ENCODE measurements at regions of chr14 and their contacts with region 1.

Region 1: DNA sequence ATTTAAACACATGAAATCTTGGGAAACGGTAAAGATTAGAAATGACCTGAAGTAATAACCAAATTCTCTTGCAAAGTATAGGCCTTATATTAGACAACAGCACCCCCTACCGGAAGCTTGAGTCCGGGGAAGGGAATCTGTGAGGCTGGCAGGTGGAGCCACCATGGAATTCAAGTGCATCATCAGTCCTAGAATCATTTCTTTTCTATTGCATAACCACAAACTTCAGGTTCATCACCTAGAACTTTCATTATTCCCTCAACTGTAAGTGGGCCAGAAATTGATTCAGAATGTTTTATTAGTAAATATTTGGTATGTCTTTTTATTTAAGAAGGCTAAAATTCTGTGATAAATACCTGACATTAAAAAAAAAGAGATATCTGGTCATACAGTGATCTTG is 48.5 kb downstream of the AP5M1 start:
- DNase-seq: peak; percentile 74 to 88
- H3K4me3 ChIP-seq: no peak overlapping the region
- H3K4me3 Mint-ChIP-seq: no peak overlapping the region
- H3K27ac Mint-ChIP-seq: no peak overlapping the region
- H3K4me1 ChIP-seq: no peaks in the 10 kb centered on the region
- H3K4me1 Mint-ChIP-seq: no peaks in the 10 kb centered on the region
- H3K27me3 ChIP-seq: no peaks in the 10 kb centered on the region
- H3K27me3 Mint-ChIP-seq: peaks cover 3% of the 10 kb centered on the region
- CTCF ChIP-seq: peak; percentile 69 to 86

Region 2: DNA sequence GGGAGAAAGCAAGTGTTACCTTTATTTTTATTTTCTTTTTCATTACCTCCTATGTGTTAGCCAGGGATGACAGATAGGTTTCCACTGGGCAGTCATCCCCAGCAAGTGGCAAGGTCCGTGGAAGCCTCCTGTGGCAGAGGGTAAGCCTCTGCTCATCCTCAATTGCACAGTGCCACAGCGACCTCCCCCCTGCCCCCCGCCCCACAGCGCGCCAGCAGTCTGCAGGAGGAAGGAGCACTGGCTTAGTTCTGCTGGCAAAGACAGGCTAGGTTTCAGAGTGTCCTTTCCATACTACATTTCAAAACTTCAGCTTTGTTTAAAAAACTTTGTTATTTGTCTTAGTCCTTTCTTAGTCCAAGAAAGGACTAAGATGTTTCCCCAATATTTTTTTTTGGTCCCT is 243.3 kb before region 1 on chr14:
- CTCF ChIA-PET with region 1: no interaction called
- POLR2A ChIA-PET with region 1: no interaction called
- intact Hi-C with region 1: loop called (anchors 2 kb)
- DNase-seq: no peak
- H3K4me3 ChIP-seq: no peak overlapping the region
- H3K4me3 Mint-ChIP-seq: no peak overlapping the region
- H3K27ac Mint-ChIP-seq: no peak overlapping the region
- H3K4me1 ChIP-seq: no peaks in the 10 kb centered on the region
- H3K4me1 Mint-ChIP-seq: no peaks in the 10 kb centered on the region
- H3K27me3 ChIP-seq: no peaks in the 10 kb centered on the region
- H3K27me3 Mint-ChIP-seq: peaks cover 2% of the 10 kb centered on the region
- CTCF ChIP-seq: no peak

Region 3: GRCh38 chr14:57199921-57200320 is 117.4 kb before region 1 on chr14:
- CTCF ChIA-PET with region 1: no interaction called
- POLR2A ChIA-PET with region 1: no interaction called
- intact Hi-C with region 1: loop called (anchors 5 kb)
- DNase-seq: no peak
- H3K4me3 ChIP-seq: no peak overlapping the region
- H3K4me3 Mint-ChIP-seq: no peak overlapping the region
- H3K27ac Mint-ChIP-seq: peak overlapping the region; percentile 44
- H3K4me1 ChIP-seq: no peaks in the 10 kb centered on the region
- H3K4me1 Mint-ChIP-seq: no peaks in the 10 kb centered on the region
- H3K27me3 ChIP-seq: no peaks in the 10 kb centered on the region
- H3K27me3 Mint-ChIP-seq: no peaks in the 10 kb centered on the region
- CTCF ChIP-seq: no peak

Region 4: DNA sequence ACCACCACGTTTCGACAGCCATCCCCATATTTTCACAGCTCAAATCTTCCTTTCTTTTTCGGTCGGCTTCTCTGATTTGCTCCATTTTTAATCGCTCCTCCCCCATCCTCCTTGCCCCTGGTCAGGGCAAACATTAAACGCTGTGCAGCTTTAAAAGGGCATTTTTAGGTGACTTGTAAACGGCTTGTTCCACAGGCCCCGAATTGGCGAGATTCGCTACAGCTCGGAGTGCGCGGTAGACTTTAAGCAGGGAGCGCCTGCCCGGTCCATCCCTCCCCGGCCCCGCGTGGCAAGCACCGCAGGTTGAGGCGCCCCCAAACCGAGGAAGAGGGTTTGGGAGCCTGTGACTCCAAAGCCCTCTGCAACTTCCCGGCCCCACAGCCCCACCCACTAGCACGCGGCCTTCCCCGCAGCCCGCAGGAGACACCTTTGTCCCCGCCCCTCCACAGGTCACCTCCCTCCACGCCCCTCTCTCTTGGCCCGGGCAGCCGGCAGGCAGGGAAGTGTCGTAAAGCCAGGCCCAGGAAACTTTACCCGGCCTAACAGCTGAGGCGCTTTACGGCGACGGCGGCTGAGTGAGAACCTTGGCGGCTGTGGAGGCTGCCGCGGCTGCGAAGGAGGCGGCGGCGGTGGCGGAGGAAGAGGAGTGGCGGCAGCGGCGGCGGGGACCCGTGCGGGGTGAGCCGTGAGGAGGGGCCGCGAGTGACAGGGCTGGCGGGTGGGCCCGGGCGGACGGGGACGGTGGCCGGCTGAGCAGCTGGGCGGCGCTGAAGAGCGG is 72.9 kb after region 1 on chr14 and contains the start of gene NAA30:
- CTCF ChIA-PET with region 1: no interaction called
- POLR2A ChIA-PET with region 1: no interaction called
- intact Hi-C with region 1: loop called (anchors 5 kb)
- DNase-seq: peak; percentile 96 to 99
- H3K4me3 ChIP-seq: peak within 1 kb of the TSS; percentile 94
- H3K4me3 Mint-ChIP-seq: peak within 1 kb of the TSS; percentile 80
- H3K27ac Mint-ChIP-seq: peak within 1 kb of the TSS; percentile 81
- H3K4me1 ChIP-seq: peaks cover 13% of the 10 kb centered on the region
- H3K4me1 Mint-ChIP-seq: peaks cover 7% of the 10 kb centered on the region
- H3K27me3 ChIP-seq: no peaks in the 10 kb centered on the region
- H3K27me3 Mint-ChIP-seq: no peaks in the 10 kb centered on the region
- CTCF ChIP-seq: no peak
- total RNA-seq, gene NAA30: 21.0 and 23.7 TPM in 2 replicates